ENCODE measurements at regions of chr15 and their contacts with region 1.

Region 1: GRCh38 chr15:39624806-39625205 is 43.9 kb downstream of the THBS1 start:
- DNase-seq: peak; percentile 63
- ATAC-seq: peak; percentile 79 to 93

Region 2: GRCh38 chr15:39171944-39172368 is 452.9 kb before region 1 on chr15:
- intact Hi-C with region 1: loop called in 1 of 2 experiments (anchors 5 kb)
- DNase-seq: peak; percentile 42
- ATAC-seq: peak; percentile 83 to 96

Region 3: DNA sequence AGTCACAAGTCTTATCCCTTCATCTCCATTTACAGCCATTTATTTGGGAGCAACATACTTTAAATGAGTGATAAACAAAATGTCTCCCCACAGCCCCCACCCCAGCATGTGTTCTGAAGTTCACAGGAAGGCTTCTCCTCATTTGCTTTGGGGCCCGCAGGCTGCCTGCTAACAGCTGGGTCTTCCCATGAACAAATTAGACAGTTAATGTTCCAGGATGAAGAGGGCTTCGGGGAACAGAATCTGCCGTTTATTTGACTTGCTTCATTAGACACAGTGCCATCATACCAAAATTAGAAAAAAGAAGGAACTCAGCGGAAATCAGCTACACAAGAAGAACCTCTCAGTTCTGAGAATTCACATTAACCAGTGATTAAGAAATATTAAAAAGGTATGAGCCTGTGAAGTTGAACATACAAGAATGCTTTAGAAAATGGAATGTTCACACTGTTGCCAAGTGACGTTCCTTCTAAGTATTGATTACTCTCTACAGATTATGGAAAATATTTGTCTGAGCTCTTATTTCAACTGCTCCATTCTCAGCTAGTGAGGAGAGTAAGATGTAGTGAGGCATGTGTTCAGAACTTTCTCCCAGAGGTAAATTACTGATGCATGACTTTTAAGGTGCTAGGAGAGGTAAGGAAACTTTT is 151.4 kb before region 1 on chr15:
- intact Hi-C with region 1: no loop called
- DNase-seq: no peak
- ATAC-seq: peak; percentile 9 to 27

Measured in left cardiac atrium (tissue), 4 donors.